Transverse colon (tissue), 4 donors: ENCODE measurements at regions of chr14 and their contacts with region 1.

Region 1: GRCh38 chr14:55446218-55446654 is 5.8 kb upstream of the TBPL2 start:
- DNase-seq: peak; percentile 60
- H3K4me3 ChIP-seq: no peak overlapping the region
- H3K27ac ChIP-seq: no peak overlapping the region
- H3K4me1 ChIP-seq: peaks cover 6 to 45% (median 12%) of the 10 kb centered on the region in 4 donors
- H3K27me3 ChIP-seq: no peaks in the 10 kb centered on the region
- CTCF ChIP-seq: peak; percentile 67 to 71 (median 70)
- EP300 ChIP-seq: no peak
- POLR2A ChIP-seq: no peak

Region 2: DNA sequence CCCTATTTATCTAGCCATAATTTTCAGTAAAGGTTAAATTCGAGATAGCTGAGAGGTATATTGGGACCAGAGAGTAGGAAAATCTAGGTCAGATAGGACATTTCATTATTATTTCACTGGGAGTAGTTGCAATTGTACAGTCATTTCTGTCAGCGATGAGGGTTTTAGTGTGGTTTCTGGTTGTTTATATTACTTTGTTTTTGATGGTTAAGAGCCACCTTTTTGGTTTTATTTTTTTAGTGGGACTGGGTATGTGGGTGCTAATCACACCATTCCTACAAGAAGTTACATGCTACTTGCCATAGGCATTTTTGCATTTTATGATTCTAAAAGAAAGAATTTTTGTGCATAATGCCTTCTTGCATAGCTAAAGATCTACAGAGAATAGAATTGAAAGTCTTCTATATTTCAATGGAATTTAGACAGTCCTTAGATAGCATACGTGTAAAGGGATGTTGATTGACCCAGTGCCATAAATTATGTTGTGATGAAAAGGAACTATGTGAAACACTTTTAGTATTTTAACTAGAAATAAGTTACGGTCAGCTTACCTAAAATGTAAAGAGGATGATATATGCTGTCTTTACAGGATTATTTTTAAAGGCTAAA is 218.9 kb after region 1 on chr14:
- in situ Hi-C with region 1: loop called in 2 of 4 experiments (anchors 25 kb)
- intact Hi-C with region 1: no loop called
- DNase-seq: no peak
- H3K4me3 ChIP-seq: no peak overlapping the region
- H3K27ac ChIP-seq: no peak overlapping the region
- H3K4me1 ChIP-seq: no peaks in the 10 kb centered on the region
- H3K27me3 ChIP-seq: no peaks in the 10 kb centered on the region
- CTCF ChIP-seq: no peak
- EP300 ChIP-seq: no peak
- POLR2A ChIP-seq: no peak